Caki2 (cell line): ENCODE measurements at regions of chr6 and their contacts with region 1.

Region 1: DNA sequence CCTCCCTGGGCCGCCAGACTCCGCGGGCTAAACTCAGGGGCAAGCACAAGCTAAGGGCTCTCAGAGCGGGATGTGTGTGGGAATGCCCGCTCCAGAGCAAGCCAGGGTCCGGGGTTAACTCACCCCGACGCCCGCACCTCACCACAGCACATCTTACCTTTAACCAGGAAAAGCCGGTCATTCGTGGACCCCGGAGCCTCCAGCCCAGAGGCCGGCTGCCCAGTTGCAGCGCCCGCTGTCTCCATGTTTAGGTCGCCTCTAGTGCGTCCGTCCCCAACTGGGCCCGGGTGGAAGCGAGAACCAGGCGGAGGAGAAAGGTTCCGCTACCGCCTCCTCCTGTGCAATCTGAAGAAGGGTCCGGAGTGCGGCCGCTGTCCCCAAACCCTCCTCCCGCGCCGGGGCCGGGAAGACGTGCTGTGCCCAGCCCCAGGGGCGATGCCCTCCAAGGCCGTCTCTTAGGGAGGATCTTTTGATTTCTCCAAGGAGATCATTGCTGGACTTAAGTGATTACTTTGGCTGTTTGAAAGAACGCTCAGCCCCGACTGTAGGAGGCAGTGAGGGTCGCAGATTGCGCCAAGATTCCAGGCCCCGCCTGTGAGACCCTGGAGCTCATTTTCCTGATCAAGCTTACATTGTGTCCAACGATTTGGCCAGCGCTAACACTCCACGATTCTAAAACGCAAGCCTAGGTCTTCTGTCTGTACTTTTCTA is at the start of gene TMEM242:
- DNase-seq: peak; percentile 89
- total RNA-seq, gene TMEM242: 3.2 and 3.3 TPM in 2 replicates

Region 2: GRCh38 chr6:157667211-157668008 is 344.0 kb after region 1 on chr6:
- in situ Hi-C with region 1: loop called (anchors 10 kb)
- DNase-seq: peak; percentile 37

Region 3: GRCh38 chr6:157811476-157812173 is 488.2 kb after region 1 on chr6:
- in situ Hi-C with region 1: no loop called
- DNase-seq: no peak